ENCODE measurements at regions of chr1 and their contacts with region 1.

Region 1: GRCh38 chr1:169485544-169486278 is at the start of gene SLC19A2:
- DNase-seq: peak; percentile 100
- H3K4me3 Mint-ChIP-seq: peak within 1 kb of the TSS; percentile 75
- H3K27ac Mint-ChIP-seq: peak within 1 kb of the TSS; percentile 98
- H3K4me1 Mint-ChIP-seq: peaks cover 46% of the 10 kb centered on the region
- H3K27me3 Mint-ChIP-seq: no peaks in the 10 kb centered on the region
- CTCF ChIP-seq: no peak
- total RNA-seq, gene SLC19A2: 13.9 and 16.7 TPM in 2 replicates

Region 2: GRCh38 chr1:169115891-169116585 is 369.7 kb before region 1 on chr1:
- CTCF ChIA-PET with region 1: no interaction called
- POLR2A ChIA-PET with region 1: interaction called, 5 read pairs
- intact Hi-C with region 1: loop called (anchors 10 kb)
- DNase-seq: no peak
- H3K4me3 Mint-ChIP-seq: no peak overlapping the region
- H3K27ac Mint-ChIP-seq: peak overlapping the region; percentile 49
- H3K4me1 Mint-ChIP-seq: peaks cover 60% of the 10 kb centered on the region
- H3K27me3 Mint-ChIP-seq: no peaks in the 10 kb centered on the region
- CTCF ChIP-seq: no peak

Region 3: DNA sequence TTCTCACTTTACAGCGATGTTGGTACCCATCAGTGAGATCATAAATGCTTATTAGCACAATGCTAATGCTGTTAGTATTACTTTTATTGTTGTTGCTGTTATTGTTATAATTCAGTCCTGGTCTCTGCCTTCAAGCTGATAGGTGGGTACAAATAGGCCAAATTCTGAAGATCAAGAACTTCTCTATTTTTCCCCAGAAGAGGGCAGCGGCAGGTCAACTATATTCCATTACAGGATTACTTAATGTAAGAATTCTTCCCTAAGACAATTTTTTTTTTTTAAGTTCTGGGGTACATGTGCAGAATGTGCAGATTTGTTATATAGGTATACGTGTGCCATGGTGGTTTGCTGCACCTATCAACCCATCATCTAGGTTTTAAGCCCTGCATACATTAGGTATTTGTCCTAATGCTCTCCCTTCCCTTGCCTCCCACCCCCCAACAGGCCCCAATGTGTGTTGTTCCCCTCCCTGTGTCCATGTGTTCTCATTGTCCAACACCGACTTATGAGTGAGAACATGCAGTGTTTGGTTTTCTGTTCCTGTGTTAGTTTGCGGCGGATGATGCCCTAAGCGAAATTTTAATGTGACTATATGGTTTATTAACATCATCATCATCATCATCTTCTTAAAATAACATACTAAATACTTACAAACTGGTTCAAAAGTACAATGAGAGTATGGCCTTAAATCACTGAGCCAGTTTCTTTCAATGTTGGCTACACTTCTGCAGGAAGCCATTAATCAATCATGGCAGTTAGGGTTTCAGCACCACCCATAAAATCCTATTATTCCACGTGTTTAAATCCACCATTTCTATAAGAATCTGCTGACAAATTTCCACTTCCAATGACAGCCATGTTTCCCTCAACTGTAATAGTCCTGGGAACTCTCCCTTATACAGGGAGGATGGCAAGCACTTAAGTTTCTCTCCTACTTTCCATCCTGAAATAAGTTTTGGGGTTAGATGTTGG is 19.2 kb before region 1 on chr1:
- CTCF ChIA-PET with region 1: interaction called, 7 read pairs
- POLR2A ChIA-PET with region 1: interaction called, 29 read pairs
- intact Hi-C with region 1: loop called (anchors 1 kb)
- DNase-seq: peak; percentile 72
- H3K4me3 Mint-ChIP-seq: no peak overlapping the region
- H3K27ac Mint-ChIP-seq: no peak overlapping the region
- H3K4me1 Mint-ChIP-seq: peaks cover 8% of the 10 kb centered on the region
- H3K27me3 Mint-ChIP-seq: no peaks in the 10 kb centered on the region
- CTCF ChIP-seq: peak; percentile 65

Region 4: GRCh38 chr1:169511316-169512028 is 25.8 kb after region 1 on chr1:
- CTCF ChIA-PET with region 1: interaction called, 18 read pairs
- POLR2A ChIA-PET with region 1: interaction called, 242 read pairs
- intact Hi-C with region 1: loop called (anchors 1 kb)
- DNase-seq: peak; percentile 86
- H3K4me3 Mint-ChIP-seq: peak overlapping the region; percentile 5
- H3K27ac Mint-ChIP-seq: peak overlapping the region; percentile 86
- H3K4me1 Mint-ChIP-seq: peaks cover 62% of the 10 kb centered on the region
- H3K27me3 Mint-ChIP-seq: no peaks in the 10 kb centered on the region
- CTCF ChIP-seq: no peak

Region 5: GRCh38 chr1:169538998-169539871 is 53.5 kb after region 1 on chr1:
- CTCF ChIA-PET with region 1: interaction called, 4 read pairs
- POLR2A ChIA-PET with region 1: interaction called, 10 read pairs
- intact Hi-C with region 1: loop called (anchors 2 kb)
- DNase-seq: peak; percentile 95
- H3K4me3 Mint-ChIP-seq: no peak overlapping the region
- H3K27ac Mint-ChIP-seq: no peak overlapping the region
- H3K4me1 Mint-ChIP-seq: peaks cover 14% of the 10 kb centered on the region
- H3K27me3 Mint-ChIP-seq: no peaks in the 10 kb centered on the region
- CTCF ChIP-seq: no peak

Region 6: DNA sequence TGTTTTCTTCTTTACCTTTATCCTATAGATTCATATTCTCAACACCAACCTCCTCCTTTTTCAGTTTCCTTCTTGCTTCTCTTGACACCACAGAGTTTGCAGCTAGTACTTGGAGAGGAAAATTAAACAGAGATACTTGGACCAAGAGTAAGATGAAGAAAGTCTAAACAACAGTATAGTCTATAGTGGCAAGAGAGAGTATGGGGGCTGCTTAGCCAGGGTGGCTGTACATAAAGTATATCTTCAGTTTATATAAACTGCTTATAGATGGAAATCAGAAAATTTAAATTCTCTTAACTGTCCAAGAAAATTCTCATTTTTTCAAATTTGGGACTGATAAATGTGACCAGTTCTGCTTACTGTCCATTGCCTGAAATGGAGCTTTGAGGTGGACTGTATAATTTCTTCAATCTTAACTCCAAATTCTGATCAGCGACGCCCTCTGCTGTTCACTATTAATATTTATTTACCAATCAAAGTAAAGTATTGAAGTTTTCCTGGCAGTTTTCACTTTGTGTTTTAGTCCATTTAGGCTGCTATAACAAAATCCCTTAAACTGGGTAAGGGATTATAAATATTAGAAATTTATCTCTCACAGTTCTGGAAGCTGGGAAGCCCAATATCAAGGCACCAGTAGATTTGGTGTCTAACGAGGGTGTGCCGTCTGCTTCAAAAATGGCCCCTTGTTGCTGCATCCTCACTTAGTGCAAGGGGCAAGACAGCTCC is 323.8 kb after region 1 on chr1:
- CTCF ChIA-PET with region 1: interaction called, 3 read pairs
- POLR2A ChIA-PET with region 1: no interaction called
- intact Hi-C with region 1: loop called (anchors 5 kb)
- DNase-seq: peak; percentile 60
- H3K4me3 Mint-ChIP-seq: no peak overlapping the region
- H3K27ac Mint-ChIP-seq: no peak overlapping the region
- H3K4me1 Mint-ChIP-seq: no peaks in the 10 kb centered on the region
- H3K27me3 Mint-ChIP-seq: no peaks in the 10 kb centered on the region
- CTCF ChIP-seq: peak; percentile 59

Measured in MCF 10A (cell line).